Right ventricle myocardium superior (tissue), 1 donor: ENCODE measurements at regions of chr3 and their contacts with region 1.

Region 1: GRCh38 chr3:195863121-195864006 is 45.0 kb downstream of the TNK2 start:
- DNase-seq: peak; percentile 95
- ATAC-seq: peak; percentile 98

Region 2: DNA sequence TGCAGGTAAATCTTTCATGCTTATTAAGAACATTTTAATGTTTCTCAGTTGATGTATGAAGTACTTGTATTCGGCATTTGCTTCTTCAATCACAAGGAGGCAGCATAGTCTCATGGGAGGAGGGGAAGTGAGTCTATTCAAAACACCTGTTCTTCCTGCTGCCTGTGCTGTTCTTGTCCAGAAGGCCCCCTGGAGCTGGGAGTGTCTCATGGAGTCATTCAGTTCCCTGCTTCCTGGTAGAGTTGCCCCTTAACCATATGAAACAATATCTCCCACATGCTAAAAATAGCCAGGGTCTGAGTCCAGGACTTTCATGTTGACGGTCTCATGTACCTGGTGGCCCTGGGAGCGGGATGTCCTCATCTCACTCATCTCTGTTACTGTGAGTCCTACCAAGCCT is 304.8 kb before region 1 on chr3:
- intact Hi-C with region 1: no loop called
- DNase-seq: no peak
- ATAC-seq: peak; percentile 39

Region 3: GRCh38 chr3:195894780-195895607 is 31.6 kb after region 1 on chr3:
- intact Hi-C with region 1: loop called (anchors 1 kb)
- DNase-seq: peak; percentile 73
- ATAC-seq: peak; percentile 30

Region 4: DNA sequence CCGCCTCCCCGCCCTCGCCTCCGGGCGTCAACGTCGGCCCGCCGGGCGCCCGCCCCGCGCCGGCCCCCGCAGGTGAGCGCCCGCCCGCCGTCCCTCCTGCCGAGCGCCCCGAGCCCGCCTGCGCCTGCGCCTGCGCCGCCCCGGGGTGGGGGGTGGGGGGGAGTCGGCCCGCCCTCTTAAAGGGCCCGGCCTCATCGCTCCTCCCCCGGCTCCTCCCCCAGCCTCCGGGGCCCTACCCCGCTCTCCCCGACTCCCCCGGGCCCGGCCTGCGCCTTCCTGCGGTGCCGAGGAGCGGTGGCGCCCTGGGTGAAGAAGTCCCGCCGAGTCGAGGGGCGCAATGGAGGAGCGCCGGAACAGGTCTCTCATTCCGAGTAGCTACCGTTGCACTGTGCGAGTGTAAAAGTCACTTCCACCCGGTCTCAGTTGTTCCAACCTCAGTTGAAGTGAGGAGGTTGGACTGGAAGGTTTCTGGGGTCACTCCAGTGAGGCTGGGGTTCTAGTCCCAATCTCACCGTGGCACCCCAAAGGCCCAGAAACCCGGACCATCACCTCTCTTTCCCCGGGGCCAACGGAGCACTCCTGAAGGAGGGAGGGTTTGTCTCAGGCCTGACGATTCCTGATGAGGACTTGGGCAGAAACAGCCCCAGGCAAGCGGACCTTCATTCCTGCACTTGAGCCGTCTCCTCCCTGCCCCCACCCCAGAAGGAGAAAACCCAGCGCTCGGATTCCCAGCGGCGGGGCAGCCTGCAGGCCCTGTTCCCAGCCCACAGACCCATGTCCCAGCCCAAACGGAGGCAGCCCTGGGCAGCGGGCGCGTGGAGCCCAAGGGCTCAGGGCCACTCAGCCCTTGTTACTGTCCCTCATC is 46.5 kb after region 1 on chr3:
- intact Hi-C with region 1: loop called (anchors 5 kb)
- DNase-seq: peak; percentile 91
- ATAC-seq: peak; percentile 86

Region 5: GRCh38 chr3:195956571-195956970 is 93.2 kb after region 1 on chr3:
- intact Hi-C with region 1: no loop called
- DNase-seq: no peak
- ATAC-seq: no peak

Region 6: GRCh38 chr3:196096382-196096953 is 233.1 kb after region 1 on chr3:
- intact Hi-C with region 1: no loop called
- DNase-seq: peak; percentile 70
- ATAC-seq: peak; percentile 97